GM10248 (cell line): ENCODE measurements at regions of chr3 and their contacts with region 1.

Region 1: DNA sequence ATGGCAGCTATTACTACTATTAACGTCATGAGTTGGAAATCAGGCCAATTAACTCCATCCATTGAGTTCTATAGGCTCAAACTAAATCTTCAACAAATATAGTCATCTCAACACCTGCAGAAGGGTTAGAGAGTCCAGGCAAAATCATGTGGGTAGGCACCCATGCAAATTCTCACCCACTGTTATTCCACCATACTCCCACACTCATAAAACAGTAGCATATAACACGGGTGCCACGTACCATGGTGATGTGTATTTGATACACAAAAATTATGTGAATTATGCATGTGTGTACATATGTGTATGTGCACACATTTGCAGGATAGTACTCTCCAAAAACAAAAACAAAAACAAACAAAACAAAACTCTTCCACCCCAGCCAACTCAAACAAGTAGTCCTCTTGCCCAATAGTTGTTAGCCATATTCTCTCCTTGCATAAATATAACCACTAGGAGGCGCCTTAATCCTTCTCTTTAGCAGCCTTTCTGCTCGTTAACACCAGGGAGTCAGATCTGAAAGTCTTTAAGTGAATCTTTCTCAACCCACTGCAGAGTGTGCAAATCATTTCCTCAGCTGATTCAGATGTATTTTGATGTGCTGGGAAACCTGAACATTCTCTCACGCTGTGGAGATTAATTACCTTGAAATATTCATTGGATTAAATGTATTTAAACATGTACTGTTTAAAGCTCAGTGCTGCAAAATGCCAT is 38.0 kb upstream of the COPB2 start:
- DNase-seq: peak; percentile 62
- CTCF ChIP-seq: peak; percentile 70

Region 2: GRCh38 chr3:139378587-139379241 is 48.7 kb before region 1 on chr3:
- CTCF ChIA-PET with region 1: no interaction called
- POLR2A ChIA-PET with region 1: no interaction called
- DNase-seq: no peak
- CTCF ChIP-seq: no peak

Region 3: GRCh38 chr3:139440639-139441556 is 13.5 kb after region 1 on chr3:
- CTCF ChIA-PET with region 1: interaction called, 14 read pairs
- POLR2A ChIA-PET with region 1: no interaction called
- DNase-seq: no peak
- CTCF ChIP-seq: no peak

Region 4: DNA sequence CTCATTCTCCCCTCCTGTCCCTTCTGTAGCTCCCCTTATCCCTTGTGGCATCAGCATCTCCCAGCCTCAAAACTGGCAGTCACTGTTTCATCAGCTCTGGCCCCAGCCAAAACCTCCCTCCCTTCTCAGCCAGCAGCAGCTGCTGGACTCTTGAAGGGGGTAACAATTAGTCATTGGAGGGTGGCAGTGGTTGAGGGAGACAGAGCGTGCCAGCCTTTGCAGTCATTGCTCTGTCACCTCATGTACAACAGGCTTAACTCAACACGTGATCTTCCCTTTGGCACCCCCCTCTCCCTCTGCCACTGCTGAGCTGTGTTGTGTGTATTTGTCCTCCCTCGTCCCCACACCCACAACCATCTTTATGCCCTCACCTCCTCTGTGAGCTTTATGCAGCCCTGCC is 20.7 kb after region 1 on chr3:
- CTCF ChIA-PET with region 1: interaction called, 10 read pairs
- POLR2A ChIA-PET with region 1: no interaction called
- DNase-seq: no peak
- CTCF ChIP-seq: no peak

Region 5: DNA sequence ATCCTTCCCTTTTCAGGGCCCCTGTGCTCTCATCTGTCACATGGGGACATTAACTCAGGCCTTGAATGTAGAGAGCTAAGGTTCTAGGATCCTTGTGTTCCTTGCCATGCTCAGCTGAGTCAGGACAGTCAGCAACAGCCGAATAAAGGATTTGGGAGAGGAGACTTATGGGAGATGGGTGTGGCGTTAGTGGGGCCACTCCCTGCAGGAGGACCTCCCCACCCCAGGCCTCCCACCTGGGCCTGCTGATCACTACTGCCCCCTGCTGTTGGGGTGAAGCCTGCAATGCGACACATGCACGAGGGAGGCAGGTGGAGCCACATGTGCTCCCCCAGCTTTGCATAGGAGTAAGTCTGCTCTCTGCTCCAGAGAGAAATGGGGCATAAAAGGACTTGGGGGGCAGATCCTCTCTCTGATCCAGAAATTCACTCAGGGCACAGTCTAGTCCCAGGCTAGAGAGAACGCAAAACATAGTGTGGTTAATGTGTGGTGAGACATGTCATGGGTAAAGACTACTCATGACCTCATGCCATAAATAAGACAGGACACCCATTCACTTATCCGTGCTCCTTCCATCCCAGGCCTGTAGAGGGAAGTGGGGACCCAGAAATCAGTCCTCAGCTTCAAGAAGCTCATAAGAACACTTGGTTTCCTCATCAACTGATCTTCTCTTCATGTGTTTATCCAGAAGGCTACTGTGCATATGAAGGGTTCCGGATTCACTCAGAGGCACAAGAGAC is 92.7 kb after region 1 on chr3:
- CTCF ChIA-PET with region 1: interaction called, 12 read pairs
- POLR2A ChIA-PET with region 1: no interaction called
- DNase-seq: peak; percentile 55
- CTCF ChIP-seq: peak; percentile 14

Region 6: GRCh38 chr3:139561959-139562676 is 134.7 kb after region 1 on chr3:
- CTCF ChIA-PET with region 1: interaction called, 46 read pairs
- POLR2A ChIA-PET with region 1: no interaction called
- DNase-seq: peak; percentile 44
- CTCF ChIP-seq: peak; percentile 54

Region 7: DNA sequence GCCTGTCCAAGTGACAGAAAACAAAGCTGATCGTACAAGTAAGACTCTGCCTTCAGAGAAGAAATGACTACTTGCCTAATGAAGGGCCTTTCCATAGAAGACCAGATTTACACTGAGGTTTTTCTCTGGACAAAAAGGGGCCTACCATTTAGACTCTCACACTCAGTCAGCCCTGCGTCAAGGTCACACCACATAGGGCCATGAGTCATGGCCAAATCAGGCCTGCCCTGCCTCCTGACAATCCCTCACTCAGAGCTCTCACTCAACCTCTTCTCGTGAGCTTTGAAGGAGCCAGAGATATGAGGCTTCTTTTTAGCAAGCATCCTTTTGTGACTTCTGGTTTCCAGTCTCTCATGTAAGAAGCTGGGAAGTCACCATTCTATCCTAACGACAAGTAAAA is 318.4 kb after region 1 on chr3:
- CTCF ChIA-PET with region 1: no interaction called
- POLR2A ChIA-PET with region 1: no interaction called
- DNase-seq: no peak
- CTCF ChIP-seq: no peak